Adrenal gland (tissue), 19 donors: ENCODE measurements at regions of chr5 and their contacts with region 1.

Region 1: DNA sequence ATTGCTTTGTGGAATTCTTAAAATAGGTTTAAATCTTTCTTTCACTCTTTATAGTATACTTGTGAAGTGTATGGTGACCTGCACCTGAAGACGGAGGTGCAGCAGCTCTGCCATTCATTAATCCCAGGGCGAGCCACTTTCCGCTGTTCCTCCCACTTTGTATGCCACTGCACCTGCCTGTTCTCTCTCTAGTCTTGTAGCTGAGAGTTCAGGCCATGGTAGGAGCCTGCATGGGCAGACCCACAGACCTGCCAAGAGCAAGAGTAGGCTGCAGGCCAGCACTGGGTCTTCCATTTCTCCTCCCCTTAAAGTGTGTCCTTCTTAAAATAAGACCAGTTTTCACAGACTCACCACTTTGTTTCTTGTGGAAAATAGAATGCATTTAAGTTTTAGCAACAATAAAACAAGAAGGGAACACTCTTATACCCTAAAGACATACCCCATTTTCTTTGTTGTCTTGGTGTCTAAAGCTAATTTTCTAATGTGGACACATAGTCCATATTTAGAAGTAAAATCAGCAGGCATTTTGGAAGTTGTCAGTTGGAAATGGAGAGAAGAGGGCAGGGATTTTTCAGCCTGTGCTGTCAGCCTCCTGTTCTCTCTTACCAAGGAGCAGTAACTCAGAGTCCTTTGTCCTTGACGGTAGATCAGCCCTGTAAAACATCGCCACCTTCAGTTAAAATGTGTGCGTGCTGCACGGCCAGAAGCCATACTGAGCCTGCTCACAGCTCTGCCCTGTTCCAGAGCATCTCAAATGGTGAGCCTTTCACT is 103.2 kb downstream of the SNCAIP start:
- DNase-seq: peak; percentile 57 to 84 (median 70)
- H3K4me3 ChIP-seq: no peak overlapping the region
- H3K27ac ChIP-seq: no peak overlapping the region
- H3K4me1 ChIP-seq: no peaks in the 10 kb centered on the region
- H3K27me3 ChIP-seq: no peaks in the 10 kb centered on the region
- CTCF ChIP-seq: peak; percentile 66 to 83 (median 73)
- POLR2A ChIP-seq: no peak

Region 2: DNA sequence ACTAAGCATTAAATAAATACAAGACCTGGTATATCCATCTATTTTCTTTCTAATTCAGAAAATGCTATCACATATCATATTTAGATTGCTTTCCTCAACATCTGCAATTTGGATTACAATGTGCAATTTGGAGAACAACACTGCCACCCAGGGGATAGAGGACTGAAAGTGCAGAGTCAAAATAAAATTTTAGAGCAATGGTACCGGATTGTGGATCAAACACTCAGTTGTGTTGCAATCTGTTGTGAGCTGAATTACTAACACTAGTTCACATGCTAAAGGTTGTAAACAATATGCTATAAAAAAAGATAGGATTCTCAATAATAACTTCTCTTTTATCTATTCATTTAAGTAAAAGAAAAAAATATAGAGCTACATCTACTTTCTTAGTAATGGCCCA is 465.3 kb before region 1 on chr5:
- intact Hi-C with region 1: no loop called
- DNase-seq: peak in 5 of 7 donors; percentile 36 to 48 (median 46)
- H3K4me3 ChIP-seq: no peak overlapping the region
- H3K27ac ChIP-seq: no peak overlapping the region
- H3K4me1 ChIP-seq: no peaks in the 10 kb centered on the region
- H3K27me3 ChIP-seq: no peaks in the 10 kb centered on the region
- CTCF ChIP-seq: peak; percentile 27 to 63 (median 57)
- POLR2A ChIP-seq: no peak

Region 3: DNA sequence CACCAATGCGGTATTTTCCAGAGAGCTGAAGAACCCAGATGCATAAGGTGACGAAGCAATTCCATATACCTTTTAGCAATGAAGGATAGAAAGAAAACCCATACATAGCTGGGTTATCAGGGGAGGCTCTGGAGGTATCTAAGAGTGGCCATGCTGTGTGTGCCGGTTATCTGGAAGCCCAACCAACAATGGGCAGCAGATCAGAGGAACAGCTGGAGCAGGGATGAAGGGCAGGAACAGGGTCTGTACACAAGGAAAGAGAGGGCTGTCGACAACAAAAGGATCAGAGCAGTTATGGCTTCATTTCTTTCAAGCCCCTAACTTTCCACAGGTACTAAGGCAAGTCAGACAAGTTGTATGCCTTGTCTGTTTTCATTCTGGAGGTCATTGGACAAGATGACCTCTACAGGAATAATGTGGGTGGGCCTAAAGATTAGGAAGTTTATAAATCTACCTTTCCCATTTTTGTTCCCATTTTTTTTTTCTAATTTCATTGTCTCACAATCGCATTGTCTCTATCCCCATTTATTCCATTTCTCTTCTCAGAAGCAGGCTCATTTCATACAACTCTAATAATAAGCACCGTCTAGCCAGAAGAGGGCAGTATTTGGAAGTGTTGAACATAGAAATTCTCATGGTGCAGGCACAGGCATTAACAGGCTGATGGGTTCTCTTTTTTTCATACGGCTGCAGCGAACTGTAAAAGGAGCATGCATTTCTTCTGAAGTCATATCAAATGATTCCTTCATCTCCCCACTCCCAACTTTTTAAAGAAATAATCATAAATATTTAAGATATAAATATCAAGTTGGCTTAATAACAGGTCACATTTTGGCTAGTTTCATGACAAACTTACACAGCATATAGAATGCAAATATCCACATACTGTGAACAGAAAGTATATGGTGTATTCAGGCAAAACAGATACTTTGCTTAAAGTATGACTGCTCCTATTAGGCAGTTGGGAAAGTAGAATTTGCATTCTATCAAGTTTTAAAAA is 222.4 kb before region 1 on chr5:
- intact Hi-C with region 1: loop called (anchors 5 kb)
- DNase-seq: peak in 6 of 7 donors; percentile 39 to 70 (median 49)
- H3K4me3 ChIP-seq: no peak overlapping the region
- H3K27ac ChIP-seq: no peak overlapping the region
- H3K4me1 ChIP-seq: no peaks in the 10 kb centered on the region
- H3K27me3 ChIP-seq: no peaks in the 10 kb centered on the region
- CTCF ChIP-seq: peak; percentile 49 to 74 (median 64)
- POLR2A ChIP-seq: no peak

Region 4: GRCh38 chr5:122704243-122705036 is 289.2 kb after region 1 on chr5:
- intact Hi-C with region 1: no loop called
- DNase-seq: no peak
- H3K4me3 ChIP-seq: no peak overlapping the region
- H3K27ac ChIP-seq: no peak overlapping the region
- H3K4me1 ChIP-seq: no peaks in the 10 kb centered on the region
- H3K27me3 ChIP-seq: no peaks in the 10 kb centered on the region
- CTCF ChIP-seq: peak; percentile 42 to 61 (median 53)
- POLR2A ChIP-seq: no peak